Activated CD4-positive, alpha-beta T cell treated with anti-CD3 and anti-CD28 coated beads for 36 hours (primary cell): ENCODE measurements at regions of chr2 and their contacts with region 1.

Region 1: GRCh38 chr2:172555522-172556283 is at the start of gene PDK1:
- DNase-seq: peak; percentile 96
- ATAC-seq: peak; percentile 89
- H3K4me3 Mint-ChIP-seq: peak within 1 kb of the TSS; percentile 88
- H3K27ac Mint-ChIP-seq: peak within 1 kb of the TSS; percentile 95
- H3K4me1 Mint-ChIP-seq: peaks cover 57% of the 10 kb centered on the region
- H3K27me3 Mint-ChIP-seq: peaks cover 6% of the 10 kb centered on the region
- total RNA-seq, gene PDK1: 56.8 to 85.5 TPM

Region 2: GRCh38 chr2:171433763-171434670 is 1121.7 kb before region 1 on chr2 and contains the starts of genes DCAF17 and METTL8:
- CTCF ChIA-PET with region 1: no interaction called
- POLR2A ChIA-PET with region 1: no interaction called
- intact Hi-C with region 1: loop called in 1 of 2 experiments (anchors 2 kb)
- DNase-seq: peak; percentile 97
- ATAC-seq: peak; percentile 91
- H3K4me3 Mint-ChIP-seq: peak within 1 kb of the TSS; percentile 93
- H3K27ac Mint-ChIP-seq: peak within 1 kb of the TSS; percentile 95
- H3K4me1 Mint-ChIP-seq: peaks cover 50% of the 10 kb centered on the region
- H3K27me3 Mint-ChIP-seq: no peaks in the 10 kb centered on the region
- total RNA-seq, gene DCAF17: 18.3 TPM
- total RNA-seq, gene METTL8: 39.5 to 47.9 TPM

Region 3: DNA sequence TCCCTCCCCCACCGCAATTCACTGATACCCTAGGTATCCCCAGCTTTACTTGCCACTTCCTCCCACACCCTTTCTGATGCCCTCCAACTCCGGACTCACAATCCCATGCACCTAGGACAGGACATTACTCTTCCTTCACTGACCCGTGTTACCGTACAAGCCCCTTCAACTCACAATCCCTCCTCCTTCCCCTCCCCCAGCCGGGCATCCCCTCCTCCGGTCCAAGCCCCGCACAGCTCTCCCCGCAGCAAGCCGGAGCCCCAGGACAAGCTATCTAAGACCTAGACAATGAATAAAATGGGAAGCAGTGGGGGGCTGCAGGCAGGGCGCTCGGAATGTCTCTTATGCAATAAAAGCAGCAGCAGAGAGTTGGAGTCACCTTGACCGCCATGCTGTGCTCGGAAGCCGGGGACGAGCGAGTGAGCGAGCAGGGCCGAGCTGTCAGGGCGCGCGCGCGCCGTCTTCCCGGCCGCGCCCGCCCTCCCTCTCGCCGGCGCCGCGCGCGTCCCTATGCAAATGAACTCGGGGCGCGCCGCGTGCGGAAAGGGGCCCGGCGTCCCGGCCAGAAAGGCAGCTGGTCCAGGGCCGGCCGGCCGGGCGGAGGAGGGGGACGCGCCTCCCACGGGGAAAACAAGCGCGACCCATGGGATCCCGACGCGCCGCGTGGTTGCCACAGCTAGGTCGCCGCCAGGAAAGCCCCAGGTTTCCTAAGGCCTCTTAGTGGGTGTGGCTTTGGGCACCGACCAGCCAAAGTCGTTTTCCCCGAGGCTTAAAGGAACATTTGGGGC is 661.7 kb before region 1 on chr2 and contains the start of gene SLC25A12:
- CTCF ChIA-PET with region 1: no interaction called
- POLR2A ChIA-PET with region 1: no interaction called
- intact Hi-C with region 1: loop called in 1 of 2 experiments (anchors 2 kb)
- DNase-seq: peak; percentile 88
- ATAC-seq: peak; percentile 98
- H3K4me3 Mint-ChIP-seq: peak within 1 kb of the TSS; percentile 100
- H3K27ac Mint-ChIP-seq: peak within 1 kb of the TSS; percentile 98
- H3K4me1 Mint-ChIP-seq: peaks cover 30% of the 10 kb centered on the region
- H3K27me3 Mint-ChIP-seq: no peaks in the 10 kb centered on the region
- total RNA-seq, gene SLC25A12: 19.5 to 22.4 TPM

Region 4: GRCh38 chr2:171999604-172000469 is 555.9 kb before region 1 on chr2 and contains the start of gene METAP1D:
- CTCF ChIA-PET with region 1: no interaction called
- POLR2A ChIA-PET with region 1: no interaction called
- intact Hi-C with region 1: loop called in 1 of 2 experiments (anchors 1 kb)
- DNase-seq: peak; percentile 93
- ATAC-seq: peak; percentile 95
- H3K4me3 Mint-ChIP-seq: peak within 1 kb of the TSS; percentile 75
- H3K27ac Mint-ChIP-seq: peak within 1 kb of the TSS; percentile 87
- H3K4me1 Mint-ChIP-seq: peaks cover 18% of the 10 kb centered on the region
- H3K27me3 Mint-ChIP-seq: no peaks in the 10 kb centered on the region
- total RNA-seq, gene METAP1D: 5.3 to 6.0 TPM

Region 5: DNA sequence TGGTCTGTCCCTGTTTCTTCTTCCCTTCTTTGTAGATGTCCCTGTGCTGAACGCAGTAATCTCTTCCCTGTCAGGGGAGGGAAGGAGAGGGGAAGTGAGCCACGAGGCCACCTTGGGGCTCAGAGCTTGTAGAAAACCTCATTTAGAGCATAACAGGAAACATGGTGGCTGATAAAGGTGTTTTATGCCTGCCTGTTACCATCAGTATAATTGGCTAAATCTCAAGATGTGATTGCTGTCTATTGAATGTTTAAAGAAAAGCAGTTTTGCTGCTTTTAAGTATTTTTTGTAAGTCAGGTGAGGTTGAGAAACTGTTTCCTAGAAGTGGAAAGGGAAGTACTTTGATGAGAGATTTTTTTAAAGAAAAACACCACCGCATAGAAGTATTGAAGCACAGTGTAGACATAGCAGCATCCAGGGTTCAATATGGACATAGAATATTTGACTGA is 59.5 kb before region 1 on chr2:
- CTCF ChIA-PET with region 1: interaction called, 4 read pairs
- POLR2A ChIA-PET with region 1: no interaction called
- intact Hi-C with region 1: loop called in 1 of 2 experiments (anchors 5 kb)
- DNase-seq: peak; percentile 23
- ATAC-seq: peak; percentile 74
- H3K4me3 Mint-ChIP-seq: peak overlapping the region; percentile 38
- H3K27ac Mint-ChIP-seq: peak overlapping the region; percentile 95
- H3K4me1 Mint-ChIP-seq: peaks cover 64% of the 10 kb centered on the region
- H3K27me3 Mint-ChIP-seq: no peaks in the 10 kb centered on the region

Region 6: GRCh38 chr2:172806493-172806892 is 250.8 kb after region 1 on chr2:
- CTCF ChIA-PET with region 1: no interaction called
- POLR2A ChIA-PET with region 1: no interaction called
- intact Hi-C with region 1: no loop called
- DNase-seq: no peak
- ATAC-seq: no peak
- H3K4me3 Mint-ChIP-seq: no peak overlapping the region
- H3K27ac Mint-ChIP-seq: no peak overlapping the region
- H3K4me1 Mint-ChIP-seq: no peaks in the 10 kb centered on the region
- H3K27me3 Mint-ChIP-seq: peaks cover 3% of the 10 kb centered on the region